Adrenal gland (tissue), 19 donors: ENCODE measurements at regions of chr17 and their contacts with region 1.

Region 1: GRCh38 chr17:28854457-28855350 is at the start of gene ERAL1:
- DNase-seq: peak; percentile 82 to 92 (median 86)
- H3K4me3 ChIP-seq: peak within 1 kb of the TSS in 3 of 4 donors; percentile 68 to 93 (median 69)
- H3K27ac ChIP-seq: peak within 1 kb of the TSS in 3 of 5 donors; percentile 58 to 73 (median 64)
- H3K4me1 ChIP-seq: peaks cover 6 to 9% of the 10 kb centered on the region in 2 donors
- H3K27me3 ChIP-seq: no peaks in the 10 kb centered on the region
- CTCF ChIP-seq: peak in 1 of 6 experiments; percentile 1
- POLR2A ChIP-seq: peak in 1 of 2 donors; percentile 65
- total RNA-seq, gene ERAL1: 42.8 to 62.1 (median 51.7) TPM

Region 2: GRCh38 chr17:28916302-28916934 is 61.7 kb after region 1 on chr17:
- intact Hi-C with region 1: loop called in 1 of 2 experiments (anchors 10 kb)
- DNase-seq: peak in 6 of 7 donors; percentile 44 to 80 (median 60)
- H3K4me3 ChIP-seq: no peak overlapping the region
- H3K27ac ChIP-seq: no peak overlapping the region
- H3K4me1 ChIP-seq: peaks cover 0 to 16% of the 10 kb centered on the region in 2 donors
- H3K27me3 ChIP-seq: no peaks in the 10 kb centered on the region
- CTCF ChIP-seq: peak; percentile 46 to 75 (median 67)
- POLR2A ChIP-seq: no peak